WTC11 (cell line): ENCODE measurements at regions of chr15 and their contacts with region 1.

Region 1: DNA sequence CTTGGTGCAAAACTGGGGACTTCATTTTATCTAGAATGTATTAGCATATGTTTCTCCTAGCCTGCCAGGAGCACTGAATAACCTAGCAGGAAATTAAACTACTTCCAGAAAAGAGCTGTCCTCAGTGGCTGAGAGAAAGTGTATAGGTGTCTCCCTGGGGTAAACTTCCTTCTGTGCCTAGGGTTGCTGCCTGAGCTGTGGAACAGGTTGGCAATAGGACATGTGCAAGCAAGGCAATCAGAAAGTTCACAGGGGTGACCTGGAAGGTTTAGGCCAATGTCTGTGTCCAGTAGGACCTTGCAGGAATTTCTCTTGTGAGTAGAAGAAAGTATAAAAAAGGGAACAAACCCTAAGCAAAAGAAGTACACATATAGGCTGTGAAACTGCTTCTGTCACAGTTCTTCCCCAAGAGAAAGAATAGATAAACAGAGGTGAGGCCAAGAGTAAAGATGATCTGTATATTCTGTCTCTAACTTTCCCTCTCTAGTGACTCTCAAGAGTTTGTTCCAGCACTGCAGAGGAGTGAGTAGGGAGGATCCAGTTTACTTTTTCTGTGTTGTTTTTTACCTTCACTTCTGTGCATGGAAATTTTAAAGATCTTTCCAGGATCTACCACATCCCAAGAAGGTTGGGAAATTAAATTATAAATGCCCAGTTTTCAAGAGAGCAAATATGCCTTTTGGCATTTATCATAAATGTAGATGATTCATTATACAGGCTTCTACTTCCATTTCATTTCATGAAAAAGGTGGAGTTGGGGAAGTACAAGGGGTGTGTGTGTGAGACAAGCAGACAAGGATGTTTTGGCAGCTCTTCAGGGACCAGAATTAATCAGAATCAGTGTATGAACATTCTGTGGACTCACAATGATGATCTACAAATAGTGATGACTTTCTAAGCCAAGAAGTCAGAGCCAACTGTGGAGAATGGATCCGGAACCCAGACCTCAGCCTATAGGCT is 155.2 kb downstream of the RBPMS2 start:
- DNase-seq: no peak
- ATAC-seq: no peak
- H3K4me3 Mint-ChIP-seq: no peak overlapping the region
- H3K27ac Mint-ChIP-seq: 0 out of 2 replicates have a peak overlapping the region, but pooled peaks have one; percentile 52
- H3K4me1 Mint-ChIP-seq: peaks cover 34% of the 10 kb centered on the region
- H3K27me3 Mint-ChIP-seq: peaks cover 14% of the 10 kb centered on the region
- CTCF ChIP-seq: no peak

Region 2: DNA sequence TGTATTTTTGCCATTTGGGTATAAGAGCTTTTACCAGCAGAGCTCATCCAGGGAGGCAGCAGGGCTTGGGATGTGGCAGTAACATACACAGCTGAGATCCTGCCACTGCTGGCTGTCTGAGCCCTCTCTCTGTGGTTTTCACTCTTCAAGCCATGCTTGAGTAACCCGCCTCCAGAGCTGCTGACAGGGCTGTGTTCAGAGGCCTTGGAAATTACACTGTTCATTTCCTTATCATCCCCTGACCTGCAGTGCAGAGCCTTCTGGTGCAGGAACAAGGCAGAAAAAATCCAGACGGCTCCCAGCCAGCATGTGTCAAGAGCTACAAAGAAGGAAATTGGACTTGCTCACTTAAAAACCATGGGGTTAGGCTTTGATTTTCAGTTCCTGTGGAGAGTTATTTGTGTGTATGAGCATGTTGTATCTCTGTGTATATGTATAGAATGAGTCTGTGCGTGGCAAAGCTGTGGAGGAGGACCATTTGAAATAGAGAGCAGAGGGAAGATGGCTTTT is 112.8 kb before region 1 on chr15:
- CTCF ChIA-PET with region 1: no interaction called
- POLR2A ChIA-PET with region 1: no interaction called
- DNase-seq: no peak
- ATAC-seq: no peak
- H3K4me3 Mint-ChIP-seq: no peak overlapping the region
- H3K27ac Mint-ChIP-seq: no peak overlapping the region
- H3K4me1 Mint-ChIP-seq: peaks cover 15% of the 10 kb centered on the region
- H3K27me3 Mint-ChIP-seq: no peaks in the 10 kb centered on the region
- CTCF ChIP-seq: no peak

Region 3: DNA sequence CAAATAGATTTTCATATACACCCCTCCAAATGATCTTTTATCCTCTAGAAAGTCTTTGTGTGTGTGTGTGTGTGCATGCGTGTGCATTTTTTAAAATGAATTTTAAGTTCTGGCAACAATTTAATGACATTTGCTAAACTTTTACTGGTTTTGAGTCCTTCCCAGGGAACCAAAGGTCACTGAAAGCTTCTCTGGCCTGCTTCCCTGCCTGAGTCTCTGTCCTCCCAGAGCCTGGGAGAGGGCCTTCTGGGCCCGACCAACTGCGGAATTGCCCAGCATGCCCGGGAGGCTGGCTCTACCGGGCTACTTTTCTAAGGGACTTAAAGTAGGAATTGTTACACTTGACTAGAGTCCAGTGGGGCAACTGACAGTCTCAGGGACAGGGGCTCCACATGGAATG is 162.6 kb after region 1 on chr15:
- CTCF ChIA-PET with region 1: no interaction called
- POLR2A ChIA-PET with region 1: interaction called, 12 read pairs
- DNase-seq: no peak
- ATAC-seq: no peak
- H3K4me3 Mint-ChIP-seq: no peak overlapping the region
- H3K27ac Mint-ChIP-seq: peak overlapping the region; percentile 86
- H3K4me1 Mint-ChIP-seq: peaks cover 56% of the 10 kb centered on the region
- H3K27me3 Mint-ChIP-seq: no peaks in the 10 kb centered on the region
- CTCF ChIP-seq: no peak